Activated CD4-positive, alpha-beta memory T cell treated with anti-CD3 and anti-CD28 coated beads, Interleukin-2, amount 10 ng/mL, durations not matched to agents 7 days and 5 days (primary cell): ENCODE measurements at regions of chr14 and their contacts with region 1.

Region 1: DNA sequence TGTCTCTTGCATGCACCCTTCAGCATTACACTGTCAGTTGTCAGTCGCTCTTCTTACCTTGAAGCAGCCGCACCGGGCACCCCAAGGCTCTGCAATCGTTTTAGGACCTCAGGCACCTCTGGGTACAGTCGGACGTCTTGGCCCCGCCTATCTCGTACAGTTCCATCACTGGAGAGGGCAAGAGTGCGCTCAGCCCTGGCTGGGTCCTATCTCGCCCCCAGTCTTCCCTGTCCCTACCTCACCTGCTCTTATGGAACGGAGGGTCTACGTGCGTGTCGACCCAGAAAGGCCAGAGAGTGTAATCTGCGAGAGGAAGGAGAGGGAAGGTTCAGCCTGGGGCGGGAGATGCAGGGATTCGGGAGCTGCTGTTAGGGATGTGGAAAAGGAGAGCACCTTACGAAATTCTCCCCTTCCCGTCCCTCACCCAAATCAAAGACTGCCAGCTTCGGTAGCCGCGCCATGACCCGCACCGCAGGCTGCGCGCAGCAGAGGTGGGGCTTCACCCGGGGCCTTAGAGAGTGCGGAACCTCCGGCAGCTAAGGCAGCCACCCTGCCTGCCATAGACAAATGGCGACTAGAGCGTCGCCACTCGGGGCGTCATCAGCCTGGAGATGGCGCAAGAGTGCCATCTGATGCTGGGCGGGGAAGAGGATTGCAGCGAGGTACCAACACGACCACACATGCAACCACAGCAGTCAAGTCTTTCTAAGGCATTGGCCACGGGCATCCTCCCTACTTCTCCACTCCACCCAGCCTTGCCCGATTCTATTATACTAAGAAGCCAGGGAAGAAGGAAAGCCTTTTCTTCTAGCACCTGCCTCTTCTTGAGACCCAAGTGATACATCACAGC is at the start of gene MDP1:
- DNase-seq: peak; percentile 92
- H3K4me3 Mint-ChIP-seq: peak within 1 kb of the TSS; percentile 88
- H3K27ac Mint-ChIP-seq: peak within 1 kb of the TSS; percentile 95
- H3K4me1 Mint-ChIP-seq: peaks cover 64% of the 10 kb centered on the region
- H3K27me3 Mint-ChIP-seq: no peaks in the 10 kb centered on the region
- total RNA-seq, gene MDP1: 13.5 to 17.0 TPM

Region 2: DNA sequence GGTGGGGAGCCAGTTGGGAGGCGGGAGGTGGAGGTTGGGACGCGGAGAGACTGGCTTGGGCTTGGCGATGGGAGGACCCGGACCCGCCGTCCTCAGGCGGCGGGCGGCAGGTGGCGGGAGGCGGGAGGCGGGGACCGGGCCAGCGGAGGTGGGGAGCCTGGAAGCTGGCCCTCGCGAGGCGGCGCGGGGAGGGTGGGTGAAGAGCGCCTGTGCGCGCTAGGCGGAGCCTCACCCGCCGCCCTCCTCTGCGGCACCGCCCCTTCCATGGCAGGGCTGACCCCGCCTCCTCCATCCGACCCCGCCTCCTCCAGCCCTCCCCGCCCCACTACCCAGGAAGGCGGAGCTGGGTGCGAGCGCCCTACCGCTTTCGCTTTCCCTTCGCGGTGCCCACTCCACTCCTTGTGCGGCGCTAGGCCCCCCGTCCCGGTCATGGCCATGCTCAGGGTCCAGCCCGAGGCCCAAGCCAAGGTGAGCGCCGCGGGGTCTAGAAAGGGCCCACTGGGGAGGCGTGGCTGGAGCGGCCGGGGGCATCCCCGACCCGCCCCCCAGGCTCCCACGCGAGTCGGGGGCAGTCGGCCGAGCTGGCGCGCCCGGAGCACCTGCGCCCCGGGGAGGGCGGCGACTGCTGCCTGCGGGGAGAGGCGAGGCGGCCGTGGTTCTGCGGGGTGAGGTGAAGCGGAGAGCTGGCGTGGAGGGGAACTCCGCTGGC is 79.7 kb before region 1 on chr14 and contains the start of gene PSME1:
- CTCF ChIA-PET with region 1: interaction called, 3 read pairs
- POLR2A ChIA-PET with region 1: interaction called, 15 read pairs
- DNase-seq: peak; percentile 96
- H3K4me3 Mint-ChIP-seq: peak within 1 kb of the TSS; percentile 93
- H3K27ac Mint-ChIP-seq: peak within 1 kb of the TSS; percentile 89
- H3K4me1 Mint-ChIP-seq: peaks cover 53% of the 10 kb centered on the region
- H3K27me3 Mint-ChIP-seq: no peaks in the 10 kb centered on the region
- total RNA-seq, gene PSME1: 391 to 397 TPM

Region 3: GRCh38 chr14:24146978-24147760 is 68.6 kb before region 1 on chr14 and contains the start of gene RNF31:
- CTCF ChIA-PET with region 1: interaction called, 5 read pairs
- POLR2A ChIA-PET with region 1: interaction called, 48 read pairs
- DNase-seq: peak; percentile 99
- H3K4me3 Mint-ChIP-seq: peak within 1 kb of the TSS; percentile 96
- H3K27ac Mint-ChIP-seq: peak within 1 kb of the TSS; percentile 99
- H3K4me1 Mint-ChIP-seq: peaks cover 58% of the 10 kb centered on the region
- H3K27me3 Mint-ChIP-seq: no peaks in the 10 kb centered on the region
- total RNA-seq, gene RNF31: 122 to 129 TPM

Region 4: GRCh38 chr14:24195191-24196070 is 20.3 kb before region 1 on chr14 and contains the start of gene TM9SF1:
- CTCF ChIA-PET with region 1: interaction called, 11 read pairs
- POLR2A ChIA-PET with region 1: interaction called, 186 read pairs
- DNase-seq: peak; percentile 90
- H3K4me3 Mint-ChIP-seq: peak within 1 kb of the TSS; percentile 96
- H3K27ac Mint-ChIP-seq: peak within 1 kb of the TSS; percentile 95
- H3K4me1 Mint-ChIP-seq: peaks cover 64% of the 10 kb centered on the region
- H3K27me3 Mint-ChIP-seq: no peaks in the 10 kb centered on the region
- total RNA-seq, gene TM9SF1: 30.8 to 35.1 TPM

Region 5: GRCh38 chr14:24271134-24271833 is 55.6 kb after region 1 on chr14 and contains the start of gene RABGGTA:
- CTCF ChIA-PET with region 1: interaction called, 14 read pairs
- POLR2A ChIA-PET with region 1: interaction called, 19 read pairs
- DNase-seq: peak; percentile 90
- H3K4me3 Mint-ChIP-seq: peak within 1 kb of the TSS; percentile 86
- H3K27ac Mint-ChIP-seq: peak within 1 kb of the TSS; percentile 92
- H3K4me1 Mint-ChIP-seq: peaks cover 43% of the 10 kb centered on the region
- H3K27me3 Mint-ChIP-seq: no peaks in the 10 kb centered on the region
- total RNA-seq, gene RABGGTA: 40.2 to 41.0 TPM

Region 6: DNA sequence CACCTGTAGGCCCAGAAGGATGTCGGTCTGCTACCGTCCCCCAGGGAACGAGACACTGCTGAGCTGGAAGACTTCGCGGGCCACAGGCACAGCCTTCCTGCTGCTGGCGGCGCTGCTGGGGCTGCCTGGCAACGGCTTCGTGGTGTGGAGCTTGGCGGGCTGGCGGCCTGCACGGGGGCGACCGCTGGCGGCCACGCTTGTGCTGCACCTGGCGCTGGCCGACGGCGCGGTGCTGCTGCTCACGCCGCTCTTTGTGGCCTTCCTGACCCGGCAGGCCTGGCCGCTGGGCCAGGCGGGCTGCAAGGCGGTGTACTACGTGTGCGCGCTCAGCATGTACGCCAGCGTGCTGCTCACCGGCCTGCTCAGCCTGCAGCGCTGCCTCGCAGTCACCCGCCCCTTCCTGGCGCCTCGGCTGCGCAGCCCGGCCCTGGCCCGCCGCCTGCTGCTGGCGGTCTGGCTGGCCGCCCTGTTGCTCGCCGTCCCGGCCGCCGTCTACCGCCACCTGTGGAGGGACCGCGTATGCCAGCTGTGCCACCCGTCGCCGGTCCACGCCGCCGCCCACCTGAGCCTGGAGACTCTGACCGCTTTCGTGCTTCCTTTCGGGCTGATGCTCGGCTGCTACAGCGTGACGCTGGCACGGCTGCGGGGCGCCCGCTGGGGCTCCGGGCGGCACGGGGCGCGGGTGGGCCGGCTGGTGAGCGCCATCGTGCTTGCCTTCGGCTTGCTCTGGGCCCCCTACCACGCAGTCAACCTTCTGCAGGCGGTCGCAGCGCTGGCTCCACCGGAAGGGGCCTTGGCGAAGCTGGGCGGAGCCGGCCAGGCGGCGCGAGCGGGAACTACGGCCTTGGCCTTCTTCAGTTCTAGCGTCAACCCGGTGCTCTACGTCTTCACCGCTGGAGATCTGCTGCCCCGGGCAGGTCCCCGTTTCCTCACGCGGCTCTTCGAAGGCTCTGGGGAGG is 95.2 kb after region 1 on chr14 and contains the start of gene LTB4R:
- CTCF ChIA-PET with region 1: interaction called, 18 read pairs
- POLR2A ChIA-PET with region 1: interaction called, 13 read pairs
- DNase-seq: peak; percentile 76
- H3K4me3 Mint-ChIP-seq: peak within 1 kb of the TSS; percentile 87
- H3K27ac Mint-ChIP-seq: peak within 1 kb of the TSS; percentile 96
- H3K4me1 Mint-ChIP-seq: peaks cover 75% of the 10 kb centered on the region
- H3K27me3 Mint-ChIP-seq: no peaks in the 10 kb centered on the region
- total RNA-seq, gene LTB4R: 36.1 to 37.9 TPM

Region 7: GRCh38 chr14:24343795-24344660 is 128.3 kb after region 1 on chr14:
- CTCF ChIA-PET with region 1: no interaction called
- POLR2A ChIA-PET with region 1: no interaction called
- DNase-seq: no peak
- H3K4me3 Mint-ChIP-seq: no peak overlapping the region
- H3K27ac Mint-ChIP-seq: no peak overlapping the region
- H3K4me1 Mint-ChIP-seq: peaks cover 8% of the 10 kb centered on the region
- H3K27me3 Mint-ChIP-seq: peaks cover 47% of the 10 kb centered on the region

Region 8: DNA sequence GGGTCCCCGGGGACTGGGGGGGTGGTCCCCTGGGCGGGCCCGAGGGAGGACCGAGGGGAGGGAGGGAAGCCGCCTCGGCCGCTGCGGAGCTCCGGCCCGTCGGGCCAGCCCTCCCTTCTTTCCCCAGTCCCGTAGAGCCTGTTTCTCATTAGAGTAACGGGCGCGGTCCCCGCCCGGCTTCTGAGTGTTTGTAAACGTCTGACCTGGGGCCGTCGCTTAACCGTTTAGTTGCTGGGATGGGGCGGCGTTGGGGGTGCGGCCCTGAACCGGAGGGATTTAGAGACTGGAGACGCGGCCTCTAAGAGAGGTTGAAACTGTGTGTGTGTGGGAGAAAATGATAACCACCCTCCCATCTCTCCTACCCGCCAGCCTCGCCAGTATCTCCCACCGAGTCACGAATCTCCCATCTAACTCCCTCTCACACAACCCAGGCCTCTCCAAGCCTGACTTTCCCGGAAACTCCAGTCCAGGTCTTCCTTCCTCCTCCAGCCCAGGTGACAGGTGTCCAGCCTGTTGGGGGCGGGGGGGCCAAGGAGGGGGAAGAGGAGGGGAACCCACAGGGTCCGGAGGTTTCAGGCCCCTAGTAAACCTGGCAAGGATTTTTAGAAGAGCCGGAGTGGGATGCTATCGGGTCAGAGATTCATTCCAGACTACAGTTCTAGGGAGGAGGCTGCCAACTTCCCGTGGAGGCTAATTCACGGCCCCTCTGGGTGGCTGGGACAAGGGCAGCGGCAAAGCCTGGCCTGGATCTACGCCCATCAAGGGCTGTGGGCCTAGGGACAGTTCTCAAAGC is 151.2 kb after region 1 on chr14:
- CTCF ChIA-PET with region 1: no interaction called
- POLR2A ChIA-PET with region 1: no interaction called
- DNase-seq: no peak
- H3K4me3 Mint-ChIP-seq: no peak overlapping the region
- H3K27ac Mint-ChIP-seq: no peak overlapping the region
- H3K4me1 Mint-ChIP-seq: peaks cover 20% of the 10 kb centered on the region
- H3K27me3 Mint-ChIP-seq: peaks cover 53% of the 10 kb centered on the region

Region 9: GRCh38 chr14:24381363-24382063 is 165.8 kb after region 1 on chr14:
- CTCF ChIA-PET with region 1: no interaction called
- POLR2A ChIA-PET with region 1: no interaction called
- DNase-seq: no peak
- H3K4me3 Mint-ChIP-seq: no peak overlapping the region
- H3K27ac Mint-ChIP-seq: no peak overlapping the region
- H3K4me1 Mint-ChIP-seq: peaks cover 4% of the 10 kb centered on the region
- H3K27me3 Mint-ChIP-seq: peaks cover 10% of the 10 kb centered on the region

Region 10: GRCh38 chr14:24431569-24432258 is 216.0 kb after region 1 on chr14:
- CTCF ChIA-PET with region 1: interaction called, 19 read pairs
- POLR2A ChIA-PET with region 1: interaction called, 26 read pairs
- DNase-seq: peak; percentile 92
- H3K4me3 Mint-ChIP-seq: peak overlapping the region; percentile 92
- H3K27ac Mint-ChIP-seq: peak overlapping the region; percentile 92
- H3K4me1 Mint-ChIP-seq: peaks cover 60% of the 10 kb centered on the region
- H3K27me3 Mint-ChIP-seq: no peaks in the 10 kb centered on the region